Prostate gland (tissue), 2 donors: ENCODE measurements at regions of chr9 and their contacts with region 1.

Region 1: GRCh38 chr9:2620919-2621679 is 488 bp upstream of the VLDLR start:
- DNase-seq: peak; percentile 72
- H3K4me3 ChIP-seq: peak overlapping the region; percentile 56 to 73
- H3K27ac ChIP-seq: peak overlapping the region; percentile 78 to 86
- H3K4me1 ChIP-seq: peaks cover 5% of the 10 kb centered on the region
- H3K27me3 ChIP-seq: no peaks in the 10 kb centered on the region
- CTCF ChIP-seq: peak in 2 of 4 experiments; percentile 7 to 55
- POLR2A ChIP-seq: no peak

Region 2: DNA sequence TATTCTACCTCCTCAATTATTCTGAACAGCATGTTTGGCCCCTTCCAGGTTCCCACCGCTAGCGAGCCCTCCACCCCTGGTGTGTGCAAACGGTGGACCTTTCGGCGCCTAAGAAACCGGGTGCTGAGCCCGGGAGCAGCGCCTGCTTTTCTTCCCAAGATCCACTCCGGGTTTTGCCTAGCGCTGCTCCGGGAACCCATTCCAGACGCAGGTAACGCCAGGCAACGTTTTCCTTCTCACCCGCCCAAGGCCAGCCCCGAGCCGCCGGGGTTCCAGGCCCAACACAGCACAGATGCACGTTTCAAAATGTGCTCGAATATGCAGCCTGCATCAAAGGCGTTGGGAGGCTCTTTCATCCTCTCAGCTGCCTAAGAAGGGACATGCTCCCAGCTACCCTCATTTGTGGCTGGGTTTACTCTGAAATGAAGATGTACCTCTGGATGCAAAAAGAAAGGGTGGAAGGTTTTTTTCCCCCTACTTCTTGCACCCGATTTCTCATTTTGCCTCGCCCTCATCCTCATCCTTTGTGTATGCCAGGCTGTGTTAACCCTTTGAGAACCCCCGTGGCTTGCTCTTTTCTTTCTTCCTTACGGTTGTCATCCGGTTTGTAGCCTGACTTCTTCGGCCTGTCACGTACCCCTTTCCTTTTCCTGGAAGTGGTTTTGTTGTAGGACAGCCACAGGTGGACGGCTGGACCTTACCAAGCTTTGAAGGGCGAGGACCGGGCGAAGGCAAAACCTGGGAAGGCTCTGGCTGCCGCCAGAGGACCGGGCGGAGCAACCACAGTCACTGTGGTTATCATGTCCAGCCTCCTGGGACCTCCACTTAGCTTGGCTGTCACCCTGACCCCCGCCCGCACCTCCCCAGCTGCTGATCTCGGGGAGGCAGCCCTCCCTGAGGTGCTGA is 379.0 kb before region 1 on chr9:
- intact Hi-C with region 1: loop called (anchors 10 kb)
- DNase-seq: peak; percentile 76
- H3K4me3 ChIP-seq: peak overlapping the region; percentile 32 to 37
- H3K27ac ChIP-seq: peak overlapping the region; percentile 40 to 53
- H3K4me1 ChIP-seq: no peaks in the 10 kb centered on the region
- H3K27me3 ChIP-seq: no peaks in the 10 kb centered on the region
- CTCF ChIP-seq: no peak
- POLR2A ChIP-seq: no peak

Region 3: GRCh38 chr9:2307480-2307879 is 313.6 kb before region 1 on chr9:
- intact Hi-C with region 1: no loop called
- DNase-seq: no peak
- H3K4me3 ChIP-seq: no peak overlapping the region
- H3K27ac ChIP-seq: no peak overlapping the region
- H3K4me1 ChIP-seq: no peaks in the 10 kb centered on the region
- H3K27me3 ChIP-seq: no peaks in the 10 kb centered on the region
- CTCF ChIP-seq: no peak
- POLR2A ChIP-seq: no peak

Region 4: DNA sequence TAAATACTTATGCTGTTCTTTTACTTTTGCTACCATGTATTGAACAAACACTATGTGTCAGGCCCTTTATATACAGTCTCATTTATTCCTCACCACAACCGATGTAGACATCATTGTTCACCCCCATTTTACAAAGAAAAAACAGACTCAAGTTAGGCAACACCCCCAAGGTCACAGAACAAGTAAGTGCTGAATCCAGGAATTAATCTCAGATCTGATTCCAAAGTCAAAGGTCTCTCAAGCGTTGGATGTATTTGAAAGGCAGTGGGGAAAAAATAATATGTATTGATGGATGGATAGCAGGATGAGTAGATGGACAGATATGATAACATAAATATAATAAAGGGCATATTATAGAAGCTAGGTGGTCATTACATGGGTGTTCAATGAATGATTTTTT is 84.6 kb before region 1 on chr9:
- intact Hi-C with region 1: no loop called
- DNase-seq: no peak
- H3K4me3 ChIP-seq: no peak overlapping the region
- H3K27ac ChIP-seq: no peak overlapping the region
- H3K4me1 ChIP-seq: no peaks in the 10 kb centered on the region
- H3K27me3 ChIP-seq: no peaks in the 10 kb centered on the region
- CTCF ChIP-seq: no peak
- POLR2A ChIP-seq: no peak

Region 5: DNA sequence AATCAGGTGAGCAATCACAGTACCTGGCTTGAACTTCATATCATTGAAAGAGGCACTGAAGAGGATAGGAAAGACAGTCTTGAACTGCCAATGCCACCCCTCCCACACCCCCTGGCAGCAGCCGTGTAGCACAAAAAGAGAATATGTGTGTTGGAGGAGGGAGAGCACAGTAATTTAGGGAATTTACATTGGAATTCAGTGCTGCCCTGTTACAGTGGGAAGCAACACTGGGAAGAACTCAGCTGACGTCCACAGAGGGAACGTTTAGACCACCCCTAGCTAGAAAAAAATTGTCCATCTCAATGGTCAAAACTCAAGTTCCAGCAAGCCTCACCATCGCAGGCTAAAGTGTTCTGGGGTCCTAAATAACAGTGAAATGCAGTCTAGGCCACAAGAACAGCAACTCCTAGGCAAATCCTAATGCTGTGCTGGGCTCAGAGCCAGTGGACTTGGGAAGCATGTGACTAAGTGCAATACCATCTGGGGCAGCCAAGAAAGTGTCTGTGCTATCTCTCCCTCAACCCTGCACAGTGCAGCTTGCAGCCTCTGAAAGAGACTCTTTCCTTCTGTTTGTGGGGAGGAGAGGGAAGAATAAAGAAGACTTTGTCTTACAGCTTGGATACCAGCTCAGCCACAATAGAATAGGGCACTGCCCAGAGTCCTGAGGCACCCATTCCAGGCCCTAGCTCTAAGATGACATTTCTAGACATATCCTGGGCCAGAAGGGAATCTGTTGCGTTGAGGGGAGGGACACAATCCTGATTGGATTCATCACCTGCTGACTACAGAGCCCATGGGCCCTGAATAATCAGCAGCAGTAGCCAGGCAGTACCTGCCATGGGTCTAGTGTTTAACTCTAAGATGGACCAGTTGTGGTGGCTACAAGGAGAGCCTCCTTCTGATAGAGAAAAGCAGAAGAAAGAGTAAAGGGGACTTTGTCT is 61.6 kb before region 1 on chr9:
- intact Hi-C with region 1: loop called (anchors 5 kb)
- DNase-seq: no peak
- H3K4me3 ChIP-seq: no peak overlapping the region
- H3K27ac ChIP-seq: no peak overlapping the region
- H3K4me1 ChIP-seq: no peaks in the 10 kb centered on the region
- H3K27me3 ChIP-seq: no peaks in the 10 kb centered on the region
- CTCF ChIP-seq: no peak
- POLR2A ChIP-seq: no peak

Region 6: GRCh38 chr9:2727966-2728613 is 107.0 kb after region 1 on chr9:
- intact Hi-C with region 1: loop called (anchors 5 kb)
- DNase-seq: peak; percentile 39
- H3K4me3 ChIP-seq: no peak overlapping the region
- H3K27ac ChIP-seq: no peak overlapping the region
- H3K4me1 ChIP-seq: no peaks in the 10 kb centered on the region
- H3K27me3 ChIP-seq: no peaks in the 10 kb centered on the region
- CTCF ChIP-seq: peak; percentile 25 to 82 (median 64)
- POLR2A ChIP-seq: no peak

Region 7: DNA sequence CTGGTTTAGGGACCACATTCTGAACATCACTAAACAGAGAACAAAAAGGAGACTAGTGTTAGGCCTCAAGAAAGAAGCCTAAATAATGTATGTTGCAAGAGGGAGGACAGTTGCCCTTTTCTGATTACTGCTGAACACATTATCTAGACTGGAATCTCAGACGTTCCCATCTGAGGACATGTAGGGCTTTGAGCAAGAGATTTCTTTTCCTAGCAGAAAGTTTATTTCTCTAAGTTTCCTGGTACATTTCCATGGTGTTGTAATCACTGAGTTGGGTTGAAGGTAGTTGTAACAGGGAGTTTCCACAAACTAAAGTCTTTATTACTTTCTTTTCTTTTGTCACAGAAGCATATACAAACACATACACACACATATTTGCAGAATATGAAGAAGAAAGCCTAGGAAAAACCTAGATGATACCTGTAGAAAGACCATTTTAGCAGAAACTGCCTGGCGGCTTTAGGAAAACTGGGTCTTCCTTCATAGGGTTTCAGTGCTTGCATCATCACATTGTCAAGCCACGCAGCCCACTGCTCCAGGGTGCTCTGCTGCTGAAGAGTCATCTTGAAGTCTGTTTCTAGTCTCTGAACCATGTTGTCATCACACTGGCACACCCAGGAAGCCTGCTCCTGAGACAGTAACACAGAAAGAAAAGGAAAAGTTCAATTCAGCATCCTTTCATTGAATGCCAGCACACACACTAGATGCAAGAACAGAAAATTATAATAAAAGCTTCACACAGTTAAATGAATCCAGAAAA is 635.7 kb after region 1 on chr9:
- intact Hi-C with region 1: no loop called
- DNase-seq: no peak
- H3K4me3 ChIP-seq: no peak overlapping the region
- H3K27ac ChIP-seq: no peak overlapping the region
- H3K4me1 ChIP-seq: no peaks in the 10 kb centered on the region
- H3K27me3 ChIP-seq: no peaks in the 10 kb centered on the region
- CTCF ChIP-seq: no peak
- POLR2A ChIP-seq: no peak

Region 8: DNA sequence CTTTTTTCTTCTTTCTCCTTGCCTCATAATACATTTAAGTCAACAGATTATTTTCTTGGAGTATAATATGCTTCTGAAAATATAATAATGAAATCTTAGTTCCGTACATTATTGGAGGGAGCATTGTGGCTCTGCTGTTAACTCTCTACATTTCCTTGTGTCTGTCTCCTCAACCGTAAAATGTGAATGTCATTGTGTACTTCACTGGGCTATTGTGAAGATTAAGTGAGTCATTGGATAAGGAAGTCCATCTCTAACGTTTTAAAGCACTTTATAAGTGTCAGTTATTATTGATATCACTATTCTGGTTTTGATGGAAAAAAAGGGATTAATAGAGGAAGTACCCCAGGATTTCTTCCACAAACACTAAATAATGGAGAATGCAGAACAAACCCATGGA is 1209.2 kb after region 1 on chr9:
- intact Hi-C with region 1: no loop called
- DNase-seq: no peak
- H3K4me3 ChIP-seq: no peak overlapping the region
- H3K27ac ChIP-seq: no peak overlapping the region
- H3K4me1 ChIP-seq: no peaks in the 10 kb centered on the region
- H3K27me3 ChIP-seq: no peaks in the 10 kb centered on the region
- CTCF ChIP-seq: no peak
- POLR2A ChIP-seq: no peak